A673 (cell line): ENCODE measurements at regions of chr12 and their contacts with region 1.

Region 1: DNA sequence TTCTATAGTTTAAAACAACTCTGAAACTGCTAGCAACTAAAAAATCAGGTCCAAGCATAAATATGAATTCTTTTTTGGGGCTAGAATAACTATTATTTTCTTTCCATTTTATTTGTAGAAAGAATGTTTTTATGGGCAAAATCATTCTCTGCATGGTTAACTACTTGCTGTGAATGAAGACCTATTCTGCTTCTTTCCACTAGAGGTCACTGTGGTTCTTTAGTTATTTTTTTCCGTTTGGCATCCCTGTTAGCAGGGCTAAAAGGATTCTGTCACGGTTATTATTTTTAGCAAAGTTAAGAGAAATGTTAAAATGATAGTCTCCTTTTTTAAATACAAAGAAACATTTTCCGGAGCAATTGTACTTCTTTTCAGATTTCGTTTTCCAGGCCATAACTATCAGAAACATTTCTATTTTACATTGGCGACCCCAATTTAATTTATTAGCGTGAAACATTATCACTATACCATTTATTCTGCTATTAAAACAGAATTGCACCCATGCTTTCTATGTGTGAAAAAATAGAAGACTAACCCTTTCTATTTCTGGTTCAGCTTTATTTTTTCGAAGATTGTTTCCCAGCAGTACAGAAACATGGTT is 404.8 kb downstream of the ATP23 start:
- DNase-seq: peak; percentile 74
- H3K4me3 ChIP-seq: no peak overlapping the region
- H3K27ac ChIP-seq: no peak overlapping the region
- H3K4me1 ChIP-seq: peaks cover 25% of the 10 kb centered on the region
- H3K27me3 ChIP-seq: no peaks in the 10 kb centered on the region
- CTCF ChIP-seq: peak; percentile 81

Region 2: DNA sequence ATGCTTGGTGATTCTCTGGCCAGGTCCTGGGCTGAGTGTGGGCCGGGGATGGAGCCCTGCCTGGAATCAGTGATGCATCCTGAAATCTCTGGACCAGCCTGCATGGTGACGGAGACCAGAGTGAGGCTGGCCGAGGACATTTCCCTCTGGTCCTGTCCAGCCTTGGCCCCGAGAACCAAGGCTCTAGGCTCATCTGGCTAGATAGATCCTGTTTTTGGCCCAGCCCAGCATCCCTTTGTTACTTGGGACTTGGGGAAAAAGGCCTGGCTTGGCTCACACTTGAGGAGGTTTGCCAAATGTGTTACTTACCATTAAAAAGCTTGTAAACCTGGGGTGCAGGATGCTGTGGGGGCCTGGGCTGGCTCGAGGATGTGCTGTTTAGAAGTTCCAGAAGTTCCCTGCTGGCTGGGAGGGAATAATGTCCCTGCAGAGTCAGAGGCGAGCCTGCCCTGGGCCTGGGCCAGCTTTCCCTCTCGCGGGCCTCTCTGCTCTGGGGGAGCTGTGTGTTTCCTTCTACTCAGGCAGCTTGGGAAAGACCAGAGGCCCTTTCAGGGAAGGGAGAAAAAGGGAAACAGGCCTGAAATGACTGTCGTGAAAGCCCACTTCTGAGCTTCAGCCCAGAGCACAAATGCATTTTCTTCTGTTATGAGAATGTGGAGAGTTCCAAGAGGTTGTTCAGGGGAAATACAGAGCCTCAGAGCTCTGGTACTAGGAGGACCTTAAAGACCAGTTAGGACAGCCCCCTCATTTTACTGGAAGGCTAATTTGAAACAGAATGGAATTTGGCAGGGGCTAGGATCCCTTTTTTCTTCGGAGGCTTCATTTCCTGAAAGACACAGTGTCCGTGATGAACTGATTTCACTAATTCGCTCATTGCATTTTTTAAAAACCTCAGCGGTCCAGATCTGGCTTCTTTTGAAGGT is 452.4 kb before region 1 on chr12:
- CTCF ChIA-PET with region 1: no interaction called
- POLR2A ChIA-PET with region 1: no interaction called
- intact Hi-C with region 1: no loop called
- DNase-seq: peak; percentile 90
- H3K4me3 ChIP-seq: peak overlapping the region; percentile 5
- H3K27ac ChIP-seq: peak overlapping the region; percentile 97
- H3K4me1 ChIP-seq: peaks cover 71% of the 10 kb centered on the region
- H3K27me3 ChIP-seq: no peaks in the 10 kb centered on the region
- CTCF ChIP-seq: no peak

Region 3: DNA sequence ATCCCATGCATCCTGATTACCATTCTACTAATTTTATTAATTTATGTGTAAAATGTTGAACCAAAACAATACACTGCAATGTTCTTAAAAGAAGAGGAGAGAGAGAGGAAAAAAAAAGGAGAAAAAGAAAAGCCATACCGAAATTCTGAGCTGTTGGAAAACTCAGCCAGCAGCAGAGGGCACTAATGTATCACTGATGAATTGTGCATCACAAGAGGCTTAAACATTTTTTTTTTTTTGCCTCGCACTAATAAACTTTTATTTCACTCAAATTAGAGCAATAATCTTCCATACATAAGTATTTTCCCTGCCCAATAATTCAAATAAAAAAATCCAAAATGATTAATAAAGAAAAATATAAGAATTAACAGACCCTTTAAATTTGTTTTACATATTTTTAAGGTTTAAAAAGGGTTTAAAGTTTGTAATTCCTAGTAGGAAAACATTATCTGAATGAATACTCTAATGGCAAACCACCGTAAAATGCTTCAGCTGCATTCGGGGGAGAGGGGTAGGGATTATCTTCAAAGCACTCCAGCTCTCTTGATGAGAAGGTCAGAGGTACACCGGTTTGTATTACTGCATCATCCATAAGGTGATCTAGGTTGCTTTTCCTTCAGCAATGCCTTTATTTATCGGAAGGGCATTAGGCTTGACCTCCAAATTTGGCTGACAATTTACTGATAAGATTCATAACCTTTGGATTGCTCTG is 362.8 kb before region 1 on chr12:
- CTCF ChIA-PET with region 1: no interaction called
- POLR2A ChIA-PET with region 1: no interaction called
- intact Hi-C with region 1: loop called (anchors 5 kb)
- DNase-seq: peak; percentile 60
- H3K4me3 ChIP-seq: no peak overlapping the region
- H3K27ac ChIP-seq: no peak overlapping the region
- H3K4me1 ChIP-seq: no peaks in the 10 kb centered on the region
- H3K27me3 ChIP-seq: no peaks in the 10 kb centered on the region
- CTCF ChIP-seq: peak; percentile 82

Region 4: DNA sequence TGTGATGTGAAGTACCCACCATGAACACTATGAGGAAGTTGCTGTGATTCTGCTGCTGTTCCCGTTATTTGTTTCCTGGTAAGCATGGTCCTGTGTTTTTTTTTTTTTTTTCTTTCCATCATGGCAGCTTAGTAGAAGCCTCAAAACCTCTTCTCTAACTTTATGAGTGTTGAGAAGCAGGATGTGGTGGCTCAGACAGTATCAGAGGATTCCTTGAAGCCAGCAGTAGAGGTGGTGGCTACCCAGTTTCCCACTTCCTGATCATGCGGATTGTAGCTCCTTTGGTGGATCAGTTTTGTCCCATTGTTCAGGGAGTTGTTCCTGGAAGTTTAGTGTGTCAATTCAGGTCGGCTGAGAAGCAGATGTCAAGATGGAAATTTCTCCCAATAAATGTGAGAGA is 228.9 kb before region 1 on chr12:
- CTCF ChIA-PET with region 1: no interaction called
- POLR2A ChIA-PET with region 1: no interaction called
- intact Hi-C with region 1: no loop called
- DNase-seq: no peak
- H3K4me3 ChIP-seq: no peak overlapping the region
- H3K27ac ChIP-seq: no peak overlapping the region
- H3K4me1 ChIP-seq: no peaks in the 10 kb centered on the region
- H3K27me3 ChIP-seq: no peaks in the 10 kb centered on the region
- CTCF ChIP-seq: no peak

Region 5: GRCh38 chr12:58326534-58326933 is 19.6 kb before region 1 on chr12:
- CTCF ChIA-PET with region 1: no interaction called
- POLR2A ChIA-PET with region 1: no interaction called
- intact Hi-C with region 1: loop called (anchors 2 kb)
- DNase-seq: no peak
- H3K4me3 ChIP-seq: no peak overlapping the region
- H3K27ac ChIP-seq: no peak overlapping the region
- H3K4me1 ChIP-seq: no peaks in the 10 kb centered on the region
- H3K27me3 ChIP-seq: no peaks in the 10 kb centered on the region
- CTCF ChIP-seq: no peak

Region 6: GRCh38 chr12:58540480-58541299 is 194.6 kb after region 1 on chr12:
- CTCF ChIA-PET with region 1: no interaction called
- POLR2A ChIA-PET with region 1: no interaction called
- intact Hi-C with region 1: loop called (anchors 5 kb)
- DNase-seq: peak; percentile 89
- H3K4me3 ChIP-seq: no peak overlapping the region
- H3K27ac ChIP-seq: no peak overlapping the region
- H3K4me1 ChIP-seq: no peaks in the 10 kb centered on the region
- H3K27me3 ChIP-seq: no peaks in the 10 kb centered on the region
- CTCF ChIP-seq: peak; percentile 87

Region 7: DNA sequence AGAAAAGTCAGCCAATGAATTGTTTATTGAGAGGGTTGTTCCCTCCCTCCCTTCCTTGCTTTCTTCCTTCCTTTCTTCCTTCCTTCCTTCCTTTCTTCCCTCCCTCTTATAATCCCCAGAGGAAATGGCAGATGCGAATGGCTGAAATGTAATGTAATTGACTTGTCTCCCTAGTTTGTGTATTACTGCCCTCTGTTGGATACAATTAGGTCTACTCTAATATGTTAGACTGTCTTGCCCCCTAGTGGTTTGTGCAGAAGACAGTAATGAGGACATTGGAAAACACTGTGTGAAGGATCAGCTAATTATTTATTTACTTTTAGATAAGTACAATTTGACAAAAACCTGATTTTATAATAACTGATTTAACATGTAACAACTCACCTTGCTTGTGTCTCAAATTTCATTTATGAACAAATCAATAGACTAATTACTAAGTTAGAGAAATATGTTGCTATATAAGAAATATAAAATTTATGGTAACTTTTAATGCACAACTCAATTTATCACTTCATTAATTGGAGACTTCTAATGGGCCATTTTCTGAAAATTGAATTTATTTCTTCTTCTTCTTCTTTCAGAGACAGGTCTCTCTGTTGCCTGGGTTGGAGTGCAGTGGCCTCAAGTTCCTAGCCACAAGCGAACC is 804.0 kb after region 1 on chr12:
- CTCF ChIA-PET with region 1: no interaction called
- POLR2A ChIA-PET with region 1: no interaction called
- intact Hi-C with region 1: loop called (anchors 5 kb)
- DNase-seq: peak; percentile 93
- H3K4me3 ChIP-seq: no peak overlapping the region
- H3K27ac ChIP-seq: no peak overlapping the region
- H3K4me1 ChIP-seq: no peaks in the 10 kb centered on the region
- H3K27me3 ChIP-seq: no peaks in the 10 kb centered on the region
- CTCF ChIP-seq: peak; percentile 98